Thyroid gland (tissue), 4 donors: ENCODE measurements at regions of chr14 and their contacts with region 1.

Region 1: GRCh38 chr14:73503648-73504047 is 12.9 kb downstream of the RIOX1 start:
- DNase-seq: no peak
- H3K4me3 ChIP-seq: no peak overlapping the region
- H3K27ac ChIP-seq: no peak overlapping the region
- H3K4me1 ChIP-seq: no peaks in the 10 kb centered on the region
- H3K27me3 ChIP-seq: no peaks in the 10 kb centered on the region
- CTCF ChIP-seq: no peak
- POLR2A ChIP-seq: no peak

Region 2: GRCh38 chr14:73386342-73386741 is 117.3 kb before region 1 on chr14:
- intact Hi-C with region 1: no loop called
- DNase-seq: no peak
- H3K4me3 ChIP-seq: no peak overlapping the region
- H3K27ac ChIP-seq: no peak overlapping the region
- H3K4me1 ChIP-seq: no peaks in the 10 kb centered on the region
- H3K27me3 ChIP-seq: no peaks in the 10 kb centered on the region
- CTCF ChIP-seq: no peak
- POLR2A ChIP-seq: no peak

Region 3: DNA sequence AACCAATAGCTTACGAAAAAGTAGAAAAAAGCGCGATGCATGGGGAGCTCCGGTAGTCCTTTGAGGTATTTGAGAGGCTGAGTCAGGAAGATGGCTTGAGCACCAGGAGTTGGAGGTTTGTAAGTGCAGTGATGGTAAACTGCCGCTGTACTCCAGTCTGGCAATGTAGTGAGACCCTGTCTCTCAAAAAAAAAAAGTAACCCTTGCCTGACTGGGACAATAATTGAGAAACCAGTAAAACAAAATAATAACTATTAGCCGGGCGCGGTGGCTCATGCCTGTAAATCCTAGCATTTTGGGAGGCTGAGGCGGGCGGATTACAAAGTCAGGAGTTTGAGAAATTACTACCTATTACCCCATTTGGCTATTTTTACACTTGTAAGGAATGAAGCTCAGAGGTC is 64.7 kb after region 1 on chr14:
- intact Hi-C with region 1: no loop called
- DNase-seq: no peak
- H3K4me3 ChIP-seq: peak overlapping the region in 1 of 3 donors; percentile 57
- H3K27ac ChIP-seq: peak overlapping the region in 2 of 3 donors; percentile 89 to 94
- H3K4me1 ChIP-seq: peaks cover 16 to 24% of the 10 kb centered on the region in 2 donors
- H3K27me3 ChIP-seq: no peaks in the 10 kb centered on the region
- CTCF ChIP-seq: no peak
- POLR2A ChIP-seq: no peak

Region 4: DNA sequence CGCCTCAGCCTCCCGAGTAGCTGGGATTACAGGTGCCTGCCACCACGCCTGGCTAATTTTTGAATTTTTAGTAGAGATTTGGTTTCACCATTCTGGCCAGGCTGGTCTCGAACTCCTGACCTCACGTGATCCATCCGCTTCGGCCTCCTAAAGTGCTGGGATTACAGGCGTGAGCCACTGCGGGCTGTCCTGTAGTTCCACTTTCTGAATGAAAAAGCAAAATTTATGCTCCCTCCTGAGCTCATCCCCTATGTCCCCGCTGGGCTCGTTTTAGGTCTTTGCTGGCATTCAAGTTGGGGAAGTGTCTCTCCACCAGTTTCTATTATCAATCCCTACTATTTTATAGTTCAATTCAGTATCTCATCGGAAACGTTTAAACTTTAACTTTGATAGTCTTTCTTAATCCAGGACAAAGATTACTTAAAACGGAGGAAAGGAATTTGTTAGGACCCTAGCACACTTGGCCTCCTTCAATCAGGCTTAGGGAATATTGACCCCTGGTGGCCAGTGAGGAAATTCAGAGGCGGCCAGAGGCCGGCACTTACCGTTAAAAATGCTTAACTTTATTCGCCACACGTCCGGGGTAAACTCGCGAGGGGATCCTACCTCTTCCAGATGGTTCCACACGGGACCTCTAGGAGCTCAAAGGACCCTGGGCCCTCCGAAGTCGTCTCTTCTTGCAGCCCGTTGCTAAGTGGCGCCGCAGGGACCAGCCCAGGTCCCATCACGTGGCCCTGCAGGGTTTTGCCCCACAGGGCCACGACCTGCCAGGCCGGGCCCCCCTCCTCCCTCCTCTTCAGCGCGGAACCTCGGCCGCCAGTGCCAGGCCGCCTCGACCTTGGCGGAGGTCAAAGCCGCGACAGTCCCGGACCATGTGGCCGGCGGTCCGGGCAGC is 129.7 kb after region 1 on chr14:
- intact Hi-C with region 1: loop called (anchors 5 kb)
- DNase-seq: peak; percentile 63 to 70
- H3K4me3 ChIP-seq: peak overlapping the region in 2 of 3 donors; percentile 21 to 32
- H3K27ac ChIP-seq: peak overlapping the region; percentile 63 to 67 (median 67)
- H3K4me1 ChIP-seq: peaks cover 2 to 5% of the 10 kb centered on the region in 2 donors
- H3K27me3 ChIP-seq: no peaks in the 10 kb centered on the region
- CTCF ChIP-seq: peak; percentile 80 to 92 (median 86)
- POLR2A ChIP-seq: peak in 1 of 2 donors; percentile 27